OCI-LY7 (cell line): ENCODE measurements at regions of chr2 and their contacts with region 1.

Region 1: DNA sequence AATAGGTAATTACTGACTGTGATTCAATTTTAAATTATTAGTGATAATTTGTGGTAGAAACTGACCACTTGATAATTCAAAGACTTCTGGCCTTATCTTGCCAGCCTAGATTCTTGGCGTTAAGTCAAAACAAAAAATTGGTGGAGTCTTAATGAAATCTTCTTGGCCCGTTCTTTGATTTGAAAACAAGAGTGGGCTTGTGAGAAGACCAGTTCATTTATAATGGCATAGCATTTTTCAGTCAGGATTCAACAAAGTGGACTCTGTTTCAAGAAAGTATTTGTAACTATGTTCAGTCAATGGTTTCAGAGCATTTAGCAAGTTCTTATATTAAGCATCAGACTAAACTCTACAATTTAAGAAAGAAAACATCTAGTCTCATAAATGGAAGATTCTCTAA is 26.0 kb downstream of the ITGA4 start:
- DNase-seq: no peak
- H3K4me3 ChIP-seq: no peak overlapping the region
- H3K27ac ChIP-seq: no peak overlapping the region
- H3K4me1 ChIP-seq: no peaks in the 10 kb centered on the region
- CTCF ChIP-seq: no peak

Region 2: DNA sequence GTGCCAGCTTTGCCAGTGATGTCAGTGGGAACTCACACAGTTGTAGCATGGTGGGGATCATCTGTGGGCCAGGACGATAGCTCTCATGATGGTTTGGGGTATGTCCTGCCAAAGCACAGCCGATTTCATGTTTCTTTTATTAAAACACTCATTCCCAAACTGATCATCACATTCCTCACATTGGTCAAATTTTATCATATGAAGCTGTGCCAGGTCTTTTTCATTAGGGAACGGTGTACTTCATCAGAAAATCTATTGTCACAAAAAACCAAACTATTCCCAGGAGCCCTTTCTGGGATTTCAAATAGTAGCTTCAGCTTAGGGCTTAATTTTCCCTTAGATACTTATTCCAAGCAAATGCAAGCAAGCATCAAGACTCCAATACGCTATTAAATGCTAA is 16.0 kb after region 1 on chr2:
- CTCF ChIA-PET with region 1: no interaction called
- POLR2A ChIA-PET with region 1: interaction called, 12 read pairs
- intact Hi-C with region 1: no loop called
- DNase-seq: no peak
- H3K4me3 ChIP-seq: no peak overlapping the region
- H3K27ac ChIP-seq: no peak overlapping the region
- H3K4me1 ChIP-seq: no peaks in the 10 kb centered on the region
- CTCF ChIP-seq: no peak